ENCODE measurements at regions of chr11 and their contacts with region 1.

Region 1: GRCh38 chr11:105344939-105345338 is 205.4 kb upstream of the CARD18 start:
- DNase-seq: no peak
- ATAC-seq: no peak
- H3K4me3 ChIP-seq: no peak overlapping the region
- H3K4me3 Mint-ChIP-seq: no peak overlapping the region
- H3K27ac ChIP-seq: no peak overlapping the region
- H3K27ac Mint-ChIP-seq: no peak overlapping the region
- H3K4me1 ChIP-seq: no peaks in the 10 kb centered on the region
- H3K4me1 Mint-ChIP-seq: no peaks in the 10 kb centered on the region
- H3K27me3 ChIP-seq: no peaks in the 10 kb centered on the region
- H3K27me3 Mint-ChIP-seq: peaks cover 3% of the 10 kb centered on the region
- CTCF ChIP-seq: no peak

Region 2: GRCh38 chr11:105368711-105369110 is 23.8 kb after region 1 on chr11:
- CTCF ChIA-PET with region 1: no interaction called
- POLR2A ChIA-PET with region 1: no interaction called
- intact Hi-C with region 1: loop called in 1 of 2 experiments (anchors 1 kb)
- DNase-seq: no peak
- ATAC-seq: no peak
- H3K4me3 ChIP-seq: no peak overlapping the region
- H3K4me3 Mint-ChIP-seq: no peak overlapping the region
- H3K27ac ChIP-seq: no peak overlapping the region
- H3K27ac Mint-ChIP-seq: no peak overlapping the region
- H3K4me1 ChIP-seq: no peaks in the 10 kb centered on the region
- H3K4me1 Mint-ChIP-seq: no peaks in the 10 kb centered on the region
- H3K27me3 ChIP-seq: no peaks in the 10 kb centered on the region
- H3K27me3 Mint-ChIP-seq: no peaks in the 10 kb centered on the region
- CTCF ChIP-seq: no peak